Activated naive CD4-positive, alpha-beta T cell treated with anti-CD3 and anti-CD28 coated beads for 36 hours (primary cell): ENCODE measurements at regions of chr6 and their contacts with region 1.

Region 1: GRCh38 chr6:154763650-154764049 is 30.4 kb downstream of the SCAF8 start:
- DNase-seq: no peak
- H3K4me3 Mint-ChIP-seq: no peak overlapping the region
- H3K27ac Mint-ChIP-seq: no peak overlapping the region
- H3K4me1 Mint-ChIP-seq: peaks cover 66% of the 10 kb centered on the region
- H3K27me3 Mint-ChIP-seq: no peaks in the 10 kb centered on the region

Region 2: GRCh38 chr6:154749341-154749740 is 14.3 kb before region 1 on chr6:
- CTCF ChIA-PET with region 1: interaction called, 4 read pairs
- intact Hi-C with region 1: loop called (anchors 2 kb)
- DNase-seq: no peak
- H3K4me3 Mint-ChIP-seq: no peak overlapping the region
- H3K27ac Mint-ChIP-seq: no peak overlapping the region
- H3K4me1 Mint-ChIP-seq: peaks cover 66% of the 10 kb centered on the region
- H3K27me3 Mint-ChIP-seq: no peaks in the 10 kb centered on the region

Region 3: GRCh38 chr6:154773610-154774089 is 10.0 kb after region 1 on chr6:
- CTCF ChIA-PET with region 1: interaction called, 3 read pairs
- intact Hi-C with region 1: loop called (anchors 1 kb)
- DNase-seq: peak; percentile 19
- H3K4me3 Mint-ChIP-seq: no peak overlapping the region
- H3K27ac Mint-ChIP-seq: peak overlapping the region; percentile 70
- H3K4me1 Mint-ChIP-seq: peaks cover 43% of the 10 kb centered on the region
- H3K27me3 Mint-ChIP-seq: no peaks in the 10 kb centered on the region